MCF 10A (cell line): ENCODE measurements at regions of chr5 and their contacts with region 1.

Region 1: DNA sequence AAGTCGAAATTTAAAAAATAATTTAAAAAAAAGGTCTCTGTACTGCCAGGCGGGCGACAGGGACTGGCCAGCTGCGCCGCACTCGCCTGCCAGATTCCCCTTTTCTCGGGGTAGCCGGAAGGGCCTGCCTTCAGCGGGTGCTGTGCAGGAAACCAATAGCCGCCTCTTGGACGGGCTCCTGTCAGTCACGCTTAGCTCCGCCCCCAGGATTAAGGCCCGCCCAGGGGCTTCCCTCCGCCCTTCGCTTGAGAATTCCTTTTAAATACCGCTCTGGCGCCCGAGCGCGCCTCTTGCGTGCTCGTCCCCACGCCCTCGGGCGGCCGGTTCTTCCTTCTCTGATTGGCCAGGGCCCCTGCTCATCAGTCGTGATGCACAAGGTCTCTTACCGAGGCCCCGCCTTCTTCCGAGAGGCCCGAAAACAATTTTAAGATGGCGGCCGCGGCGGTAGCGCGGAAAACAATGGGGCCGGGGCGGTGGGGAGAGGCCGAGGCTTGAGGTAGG is at the start of gene MAML1:
- DNase-seq: peak; percentile 100
- H3K4me3 Mint-ChIP-seq: peak within 1 kb of the TSS; percentile 91
- H3K27ac Mint-ChIP-seq: peak within 1 kb of the TSS; percentile 58
- H3K4me1 Mint-ChIP-seq: peaks cover 20% of the 10 kb centered on the region
- H3K27me3 Mint-ChIP-seq: no peaks in the 10 kb centered on the region
- CTCF ChIP-seq: no peak
- total RNA-seq, gene MAML1: 36.4 and 38.4 TPM in 2 replicates

Region 2: DNA sequence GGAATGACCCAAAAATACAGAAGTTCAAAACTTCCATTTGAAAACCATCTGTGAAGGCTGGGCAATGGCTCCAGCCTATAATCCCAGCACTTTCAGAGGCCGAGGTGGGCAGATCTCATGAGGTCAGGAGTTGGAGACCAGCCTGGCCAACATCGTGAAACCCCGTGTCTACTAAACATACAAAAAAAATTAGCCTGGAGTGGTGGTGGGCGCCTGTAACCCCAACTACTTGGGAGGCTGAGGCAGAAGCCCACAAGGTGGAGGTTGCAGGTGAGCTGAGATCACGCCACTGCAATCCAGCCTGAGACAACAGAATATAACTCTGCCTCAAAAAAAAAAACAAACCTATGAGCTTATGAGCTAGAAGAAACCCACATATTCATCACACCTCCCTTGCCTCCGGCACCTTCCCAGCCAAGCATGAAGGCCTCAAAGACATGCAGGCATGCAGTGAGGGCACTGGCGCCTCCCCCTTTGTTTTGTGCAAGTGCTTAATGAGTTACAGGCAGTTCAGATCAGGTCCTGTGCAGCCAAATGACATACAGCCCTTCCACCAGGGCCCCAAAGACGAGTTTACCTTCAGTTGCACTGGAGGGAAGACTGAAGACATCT is 118.9 kb before region 1 on chr5:
- CTCF ChIA-PET with region 1: no interaction called
- POLR2A ChIA-PET with region 1: interaction called, 10 read pairs
- intact Hi-C with region 1: no loop called
- DNase-seq: no peak
- H3K4me3 Mint-ChIP-seq: no peak overlapping the region
- H3K27ac Mint-ChIP-seq: peak overlapping the region; percentile 67
- H3K4me1 Mint-ChIP-seq: peaks cover 40% of the 10 kb centered on the region
- H3K27me3 Mint-ChIP-seq: no peaks in the 10 kb centered on the region
- CTCF ChIP-seq: no peak

Region 3: GRCh38 chr5:179668391-179668790 is 64.1 kb before region 1 on chr5:
- CTCF ChIA-PET with region 1: no interaction called
- POLR2A ChIA-PET with region 1: interaction called, 3 read pairs
- intact Hi-C with region 1: loop called (anchors 5 kb)
- DNase-seq: peak; percentile 65
- H3K4me3 Mint-ChIP-seq: no peak overlapping the region
- H3K27ac Mint-ChIP-seq: peak overlapping the region; percentile 40
- H3K4me1 Mint-ChIP-seq: no peaks in the 10 kb centered on the region
- H3K27me3 Mint-ChIP-seq: no peaks in the 10 kb centered on the region
- CTCF ChIP-seq: peak; percentile 54

Region 4: GRCh38 chr5:179697993-179698934 is 34.2 kb before region 1 on chr5:
- CTCF ChIA-PET with region 1: interaction called, 3 read pairs
- POLR2A ChIA-PET with region 1: interaction called, 137 read pairs
- intact Hi-C with region 1: loop called (anchors 2 kb)
- DNase-seq: peak; percentile 100
- H3K4me3 Mint-ChIP-seq: peak overlapping the region; percentile 94
- H3K27ac Mint-ChIP-seq: peak overlapping the region; percentile 99
- H3K4me1 Mint-ChIP-seq: peaks cover 29% of the 10 kb centered on the region
- H3K27me3 Mint-ChIP-seq: no peaks in the 10 kb centered on the region
- CTCF ChIP-seq: no peak

Region 5: GRCh38 chr5:179763215-179763945 is 30.9 kb after region 1 on chr5:
- CTCF ChIA-PET with region 1: interaction called, 9 read pairs
- POLR2A ChIA-PET with region 1: interaction called, 69 read pairs
- intact Hi-C with region 1: no loop called
- DNase-seq: peak; percentile 88
- H3K4me3 Mint-ChIP-seq: peak overlapping the region; percentile 33
- H3K27ac Mint-ChIP-seq: peak overlapping the region; percentile 75
- H3K4me1 Mint-ChIP-seq: peaks cover 56% of the 10 kb centered on the region
- H3K27me3 Mint-ChIP-seq: no peaks in the 10 kb centered on the region
- CTCF ChIP-seq: peak; percentile 83

Region 6: DNA sequence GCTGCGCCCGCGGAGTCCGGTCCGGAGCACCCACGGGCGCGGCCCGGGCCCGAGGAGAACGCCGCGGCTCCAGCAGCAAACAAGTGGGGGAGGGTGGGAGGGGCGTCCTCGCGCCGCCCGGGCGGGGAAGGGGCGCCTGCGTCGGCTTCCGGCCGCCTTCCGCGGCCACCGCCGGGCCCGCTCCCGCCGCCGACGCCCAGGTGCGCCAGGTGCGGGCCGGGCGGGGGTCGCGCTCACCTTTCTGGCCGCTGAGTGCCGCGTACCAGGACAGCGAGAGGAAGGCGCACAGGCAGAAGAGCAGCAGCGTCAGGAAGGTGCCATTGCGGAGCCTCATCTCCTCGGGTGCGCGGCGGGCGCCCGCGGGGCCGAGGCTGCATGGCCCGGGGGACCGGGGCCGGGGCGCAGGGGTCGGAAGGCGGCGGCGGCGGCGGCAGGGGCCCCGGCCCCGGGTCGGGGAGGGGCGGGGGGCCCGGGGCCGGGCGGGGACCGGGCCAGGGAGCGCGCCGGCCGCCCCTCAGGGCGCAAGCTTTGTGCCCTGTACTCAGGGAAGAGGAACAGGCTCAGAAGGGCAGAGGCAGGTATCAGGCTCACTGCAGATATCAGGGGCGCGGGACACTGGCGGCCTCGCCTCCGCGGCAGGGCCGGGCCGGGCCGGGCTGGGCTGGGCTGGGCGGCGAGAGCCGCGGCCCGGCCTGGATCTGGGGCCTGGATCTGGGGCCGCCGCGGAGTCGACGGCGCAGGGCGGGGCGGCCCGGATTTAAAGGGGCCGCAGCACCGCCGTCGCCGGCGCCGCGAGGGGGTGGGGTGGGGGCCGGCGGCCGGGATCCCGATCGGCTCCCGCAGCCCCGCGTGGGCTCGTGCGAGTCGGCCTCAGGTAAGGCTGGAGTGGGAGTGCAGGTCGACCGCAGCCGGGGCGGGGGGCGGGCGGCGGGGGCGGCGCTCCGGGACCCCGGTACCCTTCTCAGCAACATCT is 74.1 kb after region 1 on chr5 and contains the start of gene MGAT4B:
- CTCF ChIA-PET with region 1: interaction called, 4 read pairs
- POLR2A ChIA-PET with region 1: interaction called, 37 read pairs
- intact Hi-C with region 1: no loop called
- DNase-seq: peak; percentile 87
- H3K4me3 Mint-ChIP-seq: peak within 1 kb of the TSS; percentile 82
- H3K27ac Mint-ChIP-seq: peak within 1 kb of the TSS; percentile 92
- H3K4me1 Mint-ChIP-seq: peaks cover 29% of the 10 kb centered on the region
- H3K27me3 Mint-ChIP-seq: no peaks in the 10 kb centered on the region
- CTCF ChIP-seq: no peak
- total RNA-seq, gene MGAT4B: 153 and 198 TPM in 2 replicates

Region 7: GRCh38 chr5:180007582-180007981 is 275.1 kb after region 1 on chr5:
- CTCF ChIA-PET with region 1: no interaction called
- POLR2A ChIA-PET with region 1: no interaction called
- intact Hi-C with region 1: no loop called
- DNase-seq: no peak
- H3K4me3 Mint-ChIP-seq: no peak overlapping the region
- H3K27ac Mint-ChIP-seq: no peak overlapping the region
- H3K4me1 Mint-ChIP-seq: no peaks in the 10 kb centered on the region
- H3K27me3 Mint-ChIP-seq: no peaks in the 10 kb centered on the region
- CTCF ChIP-seq: no peak

Region 8: DNA sequence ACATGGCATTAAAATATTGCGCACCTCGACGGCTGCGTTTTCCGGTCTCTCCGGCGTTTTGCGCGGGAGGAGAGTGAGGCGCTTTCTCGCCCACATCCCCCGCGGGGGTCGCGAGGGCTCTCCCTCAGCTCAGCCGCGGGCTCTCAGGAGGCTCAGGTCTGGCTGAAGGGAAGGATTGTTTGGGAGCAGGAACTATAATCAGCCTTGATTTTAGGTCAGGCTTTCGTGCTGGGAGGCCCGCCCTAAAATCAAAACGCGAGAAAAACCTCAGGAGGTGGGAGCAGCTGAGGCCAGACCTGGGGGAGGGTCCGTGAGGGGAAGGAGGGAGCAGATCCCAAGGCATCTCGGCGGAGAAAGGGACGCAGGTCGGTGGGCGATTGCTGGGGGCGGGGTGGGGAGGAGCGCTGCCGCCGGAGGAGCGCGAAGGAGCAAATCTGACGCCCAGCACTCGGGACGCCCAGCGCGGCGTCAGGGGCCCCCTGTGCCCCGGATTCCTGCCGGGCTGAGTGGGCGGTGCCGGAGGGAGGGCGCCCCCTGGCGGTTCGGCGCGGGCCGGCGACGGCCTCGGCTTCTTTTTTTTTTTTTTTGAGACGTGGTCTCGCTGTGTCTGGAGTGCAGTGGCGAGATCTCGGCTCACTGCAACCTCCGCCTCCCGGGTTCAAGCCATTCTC is 357.8 kb after region 1 on chr5:
- CTCF ChIA-PET with region 1: no interaction called
- POLR2A ChIA-PET with region 1: no interaction called
- intact Hi-C with region 1: no loop called
- DNase-seq: no peak
- H3K4me3 Mint-ChIP-seq: peak overlapping the region; percentile 40
- H3K27ac Mint-ChIP-seq: no peak overlapping the region
- H3K4me1 Mint-ChIP-seq: no peaks in the 10 kb centered on the region
- H3K27me3 Mint-ChIP-seq: no peaks in the 10 kb centered on the region
- CTCF ChIP-seq: peak; percentile 93